Activated B cell treated with CpG ODN at 0.5 μM for 24 hours (primary cell): ENCODE measurements at regions of chr19 and their contacts with region 1.

Region 1: DNA sequence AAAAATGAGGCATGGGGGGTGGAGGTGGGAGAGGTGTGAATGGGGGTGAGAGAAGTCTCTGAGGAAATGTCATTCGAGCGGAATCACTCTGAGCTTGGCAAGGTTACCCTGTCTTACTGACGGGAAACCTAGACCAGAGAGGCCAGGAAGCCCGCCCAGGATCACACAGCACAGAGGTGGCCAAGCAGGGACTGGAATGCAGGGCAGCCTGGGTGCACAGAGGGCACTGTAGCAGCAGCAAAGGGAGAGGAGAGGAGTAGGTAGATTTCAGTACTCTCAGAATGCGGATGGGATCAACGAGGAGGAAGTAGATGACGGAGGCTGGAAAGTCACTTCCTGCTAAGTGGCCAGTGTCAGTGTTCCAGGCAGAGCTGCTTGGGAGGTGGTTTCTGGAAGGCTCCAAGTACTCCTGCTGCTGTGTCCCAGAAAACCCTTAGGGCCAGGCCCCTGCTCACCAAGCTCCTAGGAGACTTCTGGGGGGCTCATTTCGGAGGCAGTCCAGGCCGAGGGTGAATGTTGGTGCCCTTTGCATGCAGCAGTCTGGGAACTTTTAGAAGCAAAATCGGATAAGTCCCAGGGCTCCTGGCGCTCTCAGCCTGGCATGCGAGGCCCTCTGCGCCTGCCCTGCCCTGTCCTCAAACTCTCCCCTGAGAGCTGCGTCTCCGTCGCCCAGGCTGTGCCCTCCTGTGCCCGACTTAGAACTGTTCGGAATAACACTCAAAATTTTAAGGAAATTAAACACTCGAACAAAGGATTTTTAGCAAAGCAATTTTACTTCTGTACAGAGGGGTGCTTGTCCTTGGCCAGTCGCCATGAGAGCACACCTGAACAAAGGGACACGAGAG is 33.5 kb downstream of the DNM2 start:
- DNase-seq: no peak
- ATAC-seq: no peak
- H3K4me3 Mint-ChIP-seq: no peak overlapping the region
- H3K27ac Mint-ChIP-seq: peak overlapping the region; percentile 79
- H3K4me1 Mint-ChIP-seq: peaks cover 83% of the 10 kb centered on the region
- H3K27me3 Mint-ChIP-seq: no peaks in the 10 kb centered on the region
- CTCF ChIP-seq: no peak

Region 2: GRCh38 chr19:10618846-10619245 is 132.5 kb before region 1 on chr19:
- CTCF ChIA-PET with region 1: no interaction called
- POLR2A ChIA-PET with region 1: interaction called, 15 read pairs
- intact Hi-C with region 1: no loop called
- DNase-seq: no peak
- ATAC-seq: no peak
- H3K4me3 Mint-ChIP-seq: no peak overlapping the region
- H3K27ac Mint-ChIP-seq: peak overlapping the region; percentile 18
- H3K4me1 Mint-ChIP-seq: peaks cover 53% of the 10 kb centered on the region
- H3K27me3 Mint-ChIP-seq: no peaks in the 10 kb centered on the region
- CTCF ChIP-seq: no peak